ENCODE measurements at regions of chr2 and their contacts with region 1.

Region 1: DNA sequence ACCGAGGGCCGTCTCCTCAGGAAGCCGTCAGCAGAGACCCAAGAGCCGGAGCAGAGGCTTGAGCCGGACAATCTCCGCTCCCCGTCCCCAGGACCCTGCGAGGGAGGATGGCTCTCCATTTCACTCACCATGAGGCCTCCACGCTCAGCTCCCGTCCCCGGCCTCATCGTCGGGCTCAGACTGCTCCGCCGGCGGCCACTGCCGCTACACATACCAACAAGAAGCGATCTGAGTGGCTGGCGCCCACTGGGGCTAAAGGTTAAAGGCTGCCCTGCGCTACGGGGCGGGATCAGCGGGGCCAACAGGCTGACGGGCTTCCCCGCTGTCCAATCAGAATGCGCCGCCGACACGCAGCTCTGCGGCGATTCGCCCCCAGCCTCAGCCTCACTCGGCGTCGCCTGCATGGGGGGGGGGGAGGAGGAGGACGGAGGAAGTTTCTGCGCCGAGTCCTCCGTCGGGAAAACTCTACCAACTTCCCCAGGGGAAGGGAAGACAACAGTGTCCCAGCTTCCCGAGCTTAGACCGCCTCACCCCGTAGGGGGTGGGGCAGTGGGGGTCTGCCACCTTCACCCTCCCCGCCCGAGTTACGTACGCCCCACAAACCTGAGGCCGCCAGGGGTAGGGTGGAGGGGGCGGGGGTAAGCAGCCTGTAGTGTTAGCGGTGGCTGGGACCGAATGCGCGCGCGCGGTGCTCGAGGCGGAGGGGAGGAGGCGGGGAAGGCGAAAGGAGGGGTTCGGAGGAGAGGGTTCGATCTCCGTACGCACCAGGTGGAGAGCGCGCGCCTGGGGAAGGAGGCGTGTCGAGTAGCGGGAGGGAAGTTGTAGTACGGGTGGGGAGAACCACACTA is at the start of gene PRPF40A:
- DNase-seq: peak; percentile 98
- ATAC-seq: peak; percentile 82
- H3K4me3 Mint-ChIP-seq: peak within 1 kb of the TSS; percentile 91
- H3K27ac Mint-ChIP-seq: peak within 1 kb of the TSS; percentile 97
- H3K4me1 Mint-ChIP-seq: peaks cover 51% of the 10 kb centered on the region
- H3K27me3 Mint-ChIP-seq: no peaks in the 10 kb centered on the region
- total RNA-seq, gene PRPF40A: 116 to 117 TPM

Region 2: GRCh38 chr2:152694161-152694661 is 23.2 kb before region 1 on chr2:
- CTCF ChIA-PET with region 1: interaction called, 33 read pairs
- POLR2A ChIA-PET with region 1: interaction called, 8 read pairs
- DNase-seq: peak; percentile 48
- ATAC-seq: peak; percentile 89
- H3K4me3 Mint-ChIP-seq: peak overlapping the region; percentile 79
- H3K27ac Mint-ChIP-seq: peak overlapping the region; percentile 92
- H3K4me1 Mint-ChIP-seq: peaks cover 17% of the 10 kb centered on the region
- H3K27me3 Mint-ChIP-seq: no peaks in the 10 kb centered on the region

Region 3: DNA sequence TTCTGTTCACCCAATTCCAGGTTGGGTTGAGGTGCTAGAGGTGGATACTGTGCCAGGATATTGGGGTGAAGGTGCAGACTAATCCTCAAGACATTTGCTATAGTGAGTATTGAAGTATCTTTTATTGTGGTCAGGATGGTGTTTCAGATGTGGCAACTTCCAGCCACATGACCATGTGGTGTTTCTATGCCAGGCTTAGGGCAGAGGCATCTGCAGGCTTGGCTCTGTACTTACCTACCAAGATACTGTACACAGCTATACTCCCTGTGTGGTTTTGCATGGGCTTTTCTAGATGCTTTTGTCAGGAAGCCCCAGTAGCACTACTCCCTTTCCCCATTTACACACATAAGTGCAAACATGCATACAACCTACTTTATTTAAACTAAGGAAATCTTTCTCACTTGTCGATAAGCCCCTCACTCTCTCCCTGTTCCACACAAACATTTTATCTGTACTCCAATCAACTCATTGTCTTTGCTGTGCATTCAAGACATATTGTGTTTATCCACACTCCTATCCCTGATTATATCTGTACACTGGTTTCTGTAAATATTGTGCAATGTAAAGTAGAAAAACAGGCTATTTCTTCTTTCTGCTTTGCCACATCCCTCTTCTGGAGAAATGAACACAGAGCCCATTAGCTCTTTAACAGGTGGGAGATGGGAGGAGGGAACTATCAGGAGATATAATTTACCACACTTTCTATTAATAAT is 13.3 kb after region 1 on chr2:
- CTCF ChIA-PET with region 1: interaction called, 4 read pairs
- POLR2A ChIA-PET with region 1: interaction called, 10 read pairs
- DNase-seq: peak; percentile 70
- ATAC-seq: peak; percentile 97
- H3K4me3 Mint-ChIP-seq: no peak overlapping the region
- H3K27ac Mint-ChIP-seq: no peak overlapping the region
- H3K4me1 Mint-ChIP-seq: peaks cover 27% of the 10 kb centered on the region
- H3K27me3 Mint-ChIP-seq: no peaks in the 10 kb centered on the region

Region 4: GRCh38 chr2:152743002-152743401 is 25.6 kb after region 1 on chr2:
- CTCF ChIA-PET with region 1: interaction called, 20 read pairs
- POLR2A ChIA-PET with region 1: interaction called, 3 read pairs
- DNase-seq: no peak
- ATAC-seq: no peak
- H3K4me3 Mint-ChIP-seq: no peak overlapping the region
- H3K27ac Mint-ChIP-seq: no peak overlapping the region
- H3K4me1 Mint-ChIP-seq: no peaks in the 10 kb centered on the region
- H3K27me3 Mint-ChIP-seq: no peaks in the 10 kb centered on the region

Region 5: GRCh38 chr2:152762202-152762601 is 44.8 kb after region 1 on chr2:
- CTCF ChIA-PET with region 1: no interaction called
- POLR2A ChIA-PET with region 1: no interaction called
- DNase-seq: no peak
- ATAC-seq: no peak
- H3K4me3 Mint-ChIP-seq: no peak overlapping the region
- H3K27ac Mint-ChIP-seq: no peak overlapping the region
- H3K4me1 Mint-ChIP-seq: no peaks in the 10 kb centered on the region
- H3K27me3 Mint-ChIP-seq: no peaks in the 10 kb centered on the region

Region 6: GRCh38 chr2:152890736-152891135 is 173.3 kb after region 1 on chr2:
- CTCF ChIA-PET with region 1: no interaction called
- POLR2A ChIA-PET with region 1: no interaction called
- DNase-seq: no peak
- ATAC-seq: no peak
- H3K4me3 Mint-ChIP-seq: no peak overlapping the region
- H3K27ac Mint-ChIP-seq: no peak overlapping the region
- H3K4me1 Mint-ChIP-seq: no peaks in the 10 kb centered on the region
- H3K27me3 Mint-ChIP-seq: no peaks in the 10 kb centered on the region